GM10248 (cell line): ENCODE measurements at regions of chr12 and their contacts with region 1.

Region 1: GRCh38 chr12:107917912-107918800 is 143.7 kb downstream of the ASCL4 start:
- DNase-seq: peak; percentile 39
- CTCF ChIP-seq: peak; percentile 79

Region 2: GRCh38 chr12:107847830-107848229 is 70.3 kb before region 1 on chr12:
- CTCF ChIA-PET with region 1: no interaction called
- POLR2A ChIA-PET with region 1: no interaction called
- DNase-seq: no peak
- CTCF ChIP-seq: no peak

Region 3: GRCh38 chr12:107903341-107904061 is 14.7 kb before region 1 on chr12:
- CTCF ChIA-PET with region 1: interaction called, 27 read pairs
- POLR2A ChIA-PET with region 1: no interaction called
- DNase-seq: peak; percentile 90
- CTCF ChIP-seq: no peak

Region 4: DNA sequence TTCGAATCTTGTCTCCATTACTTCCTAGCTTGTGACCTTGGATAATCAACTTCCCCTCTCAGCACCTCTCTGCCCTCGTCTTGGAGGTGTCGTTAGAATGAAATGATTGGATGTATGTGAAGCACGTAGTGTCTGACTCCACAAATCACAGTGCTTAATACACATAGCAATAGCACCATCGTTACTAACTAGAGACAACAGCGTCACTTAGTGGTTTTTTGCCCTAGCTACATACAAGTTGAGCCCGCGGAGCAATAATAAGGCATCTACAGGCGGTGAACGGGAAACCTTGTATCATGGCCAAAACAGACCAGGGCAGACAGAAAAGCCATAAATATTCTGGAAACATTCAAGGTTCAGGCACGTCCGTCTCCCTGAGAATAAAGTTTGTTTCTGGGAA is 11.3 kb after region 1 on chr12:
- CTCF ChIA-PET with region 1: interaction called, 54 read pairs
- POLR2A ChIA-PET with region 1: no interaction called
- DNase-seq: no peak
- CTCF ChIP-seq: peak; percentile 20